ENCODE measurements at regions of chr5 and their contacts with region 1.

Region 1: DNA sequence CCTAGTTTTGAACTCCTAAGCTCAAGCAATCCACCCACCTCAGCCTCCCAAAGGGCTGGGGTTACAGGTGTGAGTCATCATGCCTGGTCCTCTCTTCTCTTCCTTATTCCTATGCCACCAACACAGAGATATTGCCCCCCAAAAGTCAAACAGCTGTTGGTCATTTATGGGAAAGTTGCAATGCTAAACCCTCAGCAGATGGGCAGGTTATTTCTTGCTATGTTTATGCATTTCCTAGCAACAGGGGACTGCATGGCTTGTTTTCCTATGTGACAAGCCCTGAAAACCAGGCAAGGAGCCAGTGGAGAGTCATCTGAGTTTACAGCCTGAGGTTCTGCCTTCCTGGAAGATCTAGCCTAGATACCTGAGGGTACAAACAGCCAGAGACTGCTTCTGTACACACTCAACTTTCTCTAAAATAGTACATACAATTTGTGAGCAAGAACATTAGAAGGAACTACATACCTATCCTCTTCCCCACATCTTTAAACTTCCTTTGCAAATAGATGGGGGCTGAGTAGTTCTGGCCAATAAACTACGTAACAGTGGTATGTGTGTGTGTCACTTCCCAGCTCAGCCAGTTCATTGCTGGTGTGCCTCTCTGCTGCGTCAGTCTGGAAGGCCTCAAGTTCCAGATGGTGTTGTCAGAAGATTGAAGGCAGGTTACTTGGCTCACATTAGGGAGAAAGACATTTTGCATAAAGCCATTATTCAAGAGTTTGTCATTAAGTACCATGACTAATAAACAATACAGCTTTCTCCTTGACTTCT is 65.4 kb downstream of the CSNK1A1 start:
- DNase-seq: peak in 2 of 4 experiments; percentile 23 to 60
- ATAC-seq: peak; percentile 71
- H3K4me3 ChIP-seq: no peak overlapping the region
- H3K27ac ChIP-seq: peak overlapping the region; percentile 65; the same call in 2 of the 3 replicates
- H3K4me1 ChIP-seq: peaks cover 7 to 15% of the 10 kb centered on the region in 2 experiments; a peak in 4 of 5 replicates
- H3K27me3 ChIP-seq: no peaks in the 10 kb centered on the region
- CTCF ChIP-seq: no peak
- EP300 ChIP-seq: 0 out of 2 replicates have a peak, but pooled peaks have one; percentile 2
- POLR2A ChIP-seq: no peak
- RAD21 ChIP-seq: 0 out of 4 replicates have a peak, but pooled peaks of 1 of the 2 experiments have one; percentile 9

Region 2: DNA sequence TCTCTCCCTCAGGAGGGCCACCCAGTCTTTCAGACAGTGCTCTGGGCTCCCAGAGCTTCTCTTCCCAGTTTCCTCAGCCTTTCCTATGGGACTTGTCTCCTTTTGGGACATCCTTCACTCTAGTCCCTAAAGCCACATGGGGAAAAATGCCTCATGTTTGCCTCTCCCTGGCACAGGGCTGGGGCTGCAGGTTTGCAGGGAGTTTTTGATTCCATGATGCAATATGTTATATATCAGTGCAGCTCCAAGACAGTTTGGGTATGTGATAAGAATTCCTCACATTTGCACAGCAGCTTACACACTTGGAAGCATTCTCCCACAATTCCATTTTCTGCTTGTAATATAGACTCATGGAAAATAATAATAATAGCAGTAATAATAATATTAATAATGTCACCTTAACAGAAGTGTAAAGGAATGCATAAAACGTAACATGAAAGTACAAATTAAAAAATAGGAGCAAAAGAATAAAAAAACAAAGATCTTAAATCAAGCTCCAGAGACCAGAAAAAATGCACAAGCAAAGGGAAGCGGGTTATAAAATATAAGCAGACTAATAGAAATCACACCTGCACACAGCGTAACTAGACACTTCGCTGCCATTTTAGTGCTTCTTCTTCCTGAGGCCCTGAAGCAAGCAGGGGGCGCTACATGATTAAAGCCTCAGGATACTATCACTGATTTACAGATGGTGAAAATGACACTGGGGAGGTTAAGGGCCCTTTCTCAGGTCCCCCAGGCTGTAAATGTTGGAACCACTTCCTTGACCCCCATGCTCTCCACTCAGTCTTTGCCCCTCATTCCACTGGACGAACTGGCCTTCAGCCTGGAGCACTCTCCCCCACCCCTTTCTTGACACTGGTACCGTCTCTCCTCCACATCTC is 36.8 kb before region 1 on chr5:
- CTCF ChIA-PET with region 1: no interaction called
- POLR2A ChIA-PET with region 1: interaction called, 4 read pairs
- in situ Hi-C with region 1: no loop called
- intact Hi-C with region 1: loop called (anchors 2 kb)
- DNase-seq: peak; percentile 48 to 82 (median 62)
- ATAC-seq: peak; percentile 66
- H3K4me3 ChIP-seq: no peak overlapping the region
- H3K27ac ChIP-seq: no peak overlapping the region
- H3K4me1 ChIP-seq: peaks cover 48 to 62% of the 10 kb centered on the region in 2 experiments
- H3K27me3 ChIP-seq: no peaks in the 10 kb centered on the region
- CTCF ChIP-seq: peak; percentile 70 to 86 (median 78)
- EP300 ChIP-seq: no peak; the same call in 1 of the 2 replicates
- POLR2A ChIP-seq: no peak
- RAD21 ChIP-seq: peak; percentile 81 to 90

Region 3: DNA sequence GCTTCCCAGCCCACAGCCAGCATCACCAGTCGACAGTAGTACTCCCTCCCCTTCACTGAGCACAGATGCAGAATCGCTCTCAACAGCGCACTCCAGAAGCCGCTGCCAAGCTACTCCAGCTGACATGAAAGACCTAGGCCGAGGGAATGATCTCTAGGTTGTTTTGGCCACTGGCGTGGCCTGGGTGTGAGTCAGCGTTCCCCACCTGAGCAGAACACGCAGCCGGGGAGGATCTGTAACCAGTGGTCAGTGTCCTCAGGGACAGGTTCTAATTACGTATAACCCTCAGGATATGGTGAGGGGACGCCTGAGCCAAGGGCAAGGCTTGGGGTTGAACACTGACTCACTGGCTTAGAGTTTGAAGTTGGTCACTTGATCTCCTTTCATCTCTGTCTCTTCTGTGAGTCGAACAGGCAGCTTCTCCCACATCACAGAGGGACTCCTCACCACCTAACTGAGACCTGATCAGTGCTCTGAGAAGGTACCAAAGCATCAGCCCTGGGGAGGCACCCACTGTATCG is 29.9 kb before region 1 on chr5:
- CTCF ChIA-PET with region 1: no interaction called
- POLR2A ChIA-PET with region 1: interaction called, 9 read pairs
- in situ Hi-C with region 1: no loop called
- intact Hi-C with region 1: loop called (anchors 2 kb)
- DNase-seq: peak; percentile 60 to 84 (median 66)
- ATAC-seq: peak; percentile 60
- H3K4me3 ChIP-seq: no peak overlapping the region
- H3K27ac ChIP-seq: peak overlapping the region; percentile 88
- H3K4me1 ChIP-seq: peaks cover 38 to 53% of the 10 kb centered on the region in 2 experiments
- H3K27me3 ChIP-seq: no peaks in the 10 kb centered on the region
- CTCF ChIP-seq: no peak
- EP300 ChIP-seq: peak; percentile 6; the same call in 1 of the 2 replicates
- POLR2A ChIP-seq: no peak
- RAD21 ChIP-seq: no peak

Region 4: GRCh38 chr5:149471406-149472183 is 14.2 kb before region 1 on chr5:
- CTCF ChIA-PET with region 1: no interaction called
- POLR2A ChIA-PET with region 1: interaction called, 34 read pairs
- in situ Hi-C with region 1: no loop called
- intact Hi-C with region 1: no loop called
- DNase-seq: peak in 3 of 4 experiments; percentile 45 to 63 (median 54)
- ATAC-seq: peak; percentile 75
- H3K4me3 ChIP-seq: no peak overlapping the region
- H3K27ac ChIP-seq: 0 out of 3 replicates have a peak overlapping the region, but pooled peaks have one; percentile 18
- H3K4me1 ChIP-seq: peaks cover 16% of the 10 kb centered on the region in 2 experiments; a peak in 4 of 5 replicates
- H3K27me3 ChIP-seq: no peaks in the 10 kb centered on the region
- CTCF ChIP-seq: no peak
- EP300 ChIP-seq: no peak
- POLR2A ChIP-seq: no peak
- RAD21 ChIP-seq: no peak

Region 5: DNA sequence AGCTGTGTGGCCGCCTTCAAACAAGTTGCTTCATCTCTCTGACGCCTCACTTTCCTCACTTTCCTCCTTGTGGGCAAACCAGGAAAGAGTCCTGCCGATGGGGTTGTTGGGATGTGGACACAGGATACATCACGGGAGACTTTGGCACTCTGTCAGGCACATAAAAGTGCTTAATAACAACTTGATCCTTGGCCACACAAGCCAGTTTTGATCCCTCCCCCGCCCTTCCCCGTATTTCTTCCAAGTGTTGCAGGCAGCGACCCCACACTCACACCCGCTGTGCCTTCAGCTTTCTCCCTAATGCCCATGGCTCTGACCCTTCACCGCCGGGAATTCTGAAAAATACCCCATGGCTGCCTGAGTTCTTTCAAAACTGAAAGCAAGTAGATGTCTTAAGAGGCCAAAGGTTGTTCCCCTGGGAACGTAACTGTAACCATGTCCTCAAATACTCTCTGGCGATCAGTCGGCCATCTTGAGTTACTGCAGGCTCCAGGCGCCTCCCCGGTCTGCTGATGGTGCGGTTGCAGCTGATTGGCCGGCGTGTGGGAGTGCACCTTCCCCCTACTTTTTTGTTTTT is 155.2 kb after region 1 on chr5:
- CTCF ChIA-PET with region 1: no interaction called
- POLR2A ChIA-PET with region 1: no interaction called
- in situ Hi-C with region 1: no loop called
- intact Hi-C with region 1: no loop called
- DNase-seq: peak; percentile 49 to 76 (median 70)
- ATAC-seq: peak; percentile 83
- H3K4me3 ChIP-seq: no peak overlapping the region
- H3K27ac ChIP-seq: peak overlapping the region; percentile 51; the same call in 2 of the 3 replicates
- H3K4me1 ChIP-seq: peaks cover 7 to 12% of the 10 kb centered on the region in 2 experiments; a peak in 3 of 5 replicates
- H3K27me3 ChIP-seq: no peaks in the 10 kb centered on the region
- CTCF ChIP-seq: no peak
- EP300 ChIP-seq: no peak
- POLR2A ChIP-seq: no peak
- RAD21 ChIP-seq: no peak